HEK293 (cell line): ENCODE measurements at regions of chr19 and their contacts with region 1.

Region 1: DNA sequence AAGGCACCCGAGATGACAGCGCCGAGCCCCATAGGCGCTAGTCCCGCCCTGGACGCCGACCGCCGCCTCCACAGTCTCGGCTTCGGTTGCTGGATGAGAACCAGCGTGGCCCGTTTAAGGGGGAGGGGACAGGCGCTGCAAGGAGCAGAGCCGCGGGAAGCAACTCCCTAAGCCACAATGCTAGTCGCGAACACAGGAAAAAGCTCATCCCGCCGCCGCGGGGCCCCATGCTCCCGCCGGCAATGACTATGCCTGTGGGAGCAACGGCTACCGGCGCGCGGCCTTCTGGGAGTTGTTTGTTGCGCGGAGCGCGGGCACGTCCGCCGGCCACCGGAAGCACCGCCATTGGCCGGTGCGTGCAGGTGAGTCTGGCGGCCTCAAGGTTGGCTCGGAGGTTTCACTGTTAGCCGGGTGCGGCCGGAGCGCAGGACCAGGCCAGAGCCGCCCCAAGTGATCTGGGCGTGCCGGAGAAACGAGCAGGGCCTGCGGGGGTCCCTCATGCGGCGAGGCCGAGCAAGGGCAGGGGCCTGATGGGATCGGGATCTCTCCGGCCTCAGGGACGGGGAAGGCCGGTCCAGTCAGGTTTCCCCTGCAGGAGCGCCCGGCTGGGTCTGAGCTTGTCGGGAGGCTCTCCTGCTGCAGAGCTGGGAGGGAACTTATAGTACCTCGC is at the start of gene ZNF544:
- H3K4me3 ChIP-seq: peak within 1 kb of the TSS; percentile 93
- H3K27ac ChIP-seq: peak within 1 kb of the TSS; percentile 90
- H3K4me1 ChIP-seq: no peaks in the 10 kb centered on the region
- CTCF ChIP-seq: peak; percentile 21

Region 2: GRCh38 chr19:58117841-58118575 is 110.7 kb before region 1 on chr19:
- CTCF ChIA-PET with region 1: no interaction called
- POLR2A ChIA-PET with region 1: no interaction called
- H3K4me3 ChIP-seq: no peak overlapping the region
- H3K27ac ChIP-seq: no peak overlapping the region
- H3K4me1 ChIP-seq: no peaks in the 10 kb centered on the region
- CTCF ChIP-seq: no peak

Region 3: GRCh38 chr19:58182989-58183816 is 45.5 kb before region 1 on chr19 and contains the start of gene ZNF274:
- CTCF ChIA-PET with region 1: no interaction called
- POLR2A ChIA-PET with region 1: interaction called, 12 read pairs
- H3K4me3 ChIP-seq: peak within 1 kb of the TSS; percentile 95
- H3K27ac ChIP-seq: peak within 1 kb of the TSS; percentile 85
- H3K4me1 ChIP-seq: no peaks in the 10 kb centered on the region
- CTCF ChIP-seq: 0 out of 2 replicates have a peak, but pooled peaks have one; percentile 24

Region 4: DNA sequence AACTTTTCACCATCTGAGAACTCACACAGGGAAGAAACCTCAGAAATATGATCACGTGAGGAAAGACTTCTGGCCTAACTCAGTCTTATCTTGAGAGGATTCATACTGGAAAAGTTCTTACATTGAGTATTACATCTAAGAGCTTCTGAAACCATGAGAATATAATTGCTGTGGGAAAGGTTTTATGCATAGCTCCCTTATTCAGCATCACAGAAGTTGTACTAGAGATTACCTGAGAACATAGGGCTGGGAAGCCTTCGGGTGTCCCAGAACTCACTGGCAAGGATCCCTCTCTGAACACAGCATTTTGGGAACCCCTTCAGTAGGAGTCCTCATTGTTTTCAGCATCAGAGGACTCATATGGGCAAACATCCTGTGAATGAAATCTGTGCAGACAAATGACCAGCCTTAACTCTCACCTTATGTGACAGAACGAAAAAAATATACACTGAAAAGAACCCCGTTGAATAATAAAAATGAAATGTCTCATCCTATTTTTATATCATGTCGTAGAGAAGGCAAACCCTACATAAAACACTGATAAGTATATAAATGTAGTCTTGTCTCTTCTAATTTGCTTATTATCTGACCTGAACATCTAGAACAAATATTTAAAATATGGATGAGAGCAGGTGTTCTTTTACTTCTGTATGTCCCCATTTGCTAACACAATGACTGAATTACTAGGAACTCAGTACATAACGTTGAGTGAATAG is 31.7 kb before region 1 on chr19:
- CTCF ChIA-PET with region 1: interaction called, 3 read pairs
- POLR2A ChIA-PET with region 1: interaction called, 12 read pairs
- H3K4me3 ChIP-seq: no peak overlapping the region
- H3K27ac ChIP-seq: no peak overlapping the region
- H3K4me1 ChIP-seq: no peaks in the 10 kb centered on the region
- CTCF ChIP-seq: no peak

Region 5: GRCh38 chr19:58278157-58279041 is 49.7 kb after region 1 on chr19 and contains the start of gene ZNF8:
- CTCF ChIA-PET with region 1: no interaction called
- POLR2A ChIA-PET with region 1: interaction called, 10 read pairs
- H3K4me3 ChIP-seq: peak within 1 kb of the TSS; percentile 87
- H3K27ac ChIP-seq: peak within 1 kb of the TSS; percentile 82
- H3K4me1 ChIP-seq: no peaks in the 10 kb centered on the region
- CTCF ChIP-seq: no peak